ENCODE measurements at regions of chr6 and their contacts with region 1.

Region 1: GRCh38 chr6:26596579-26597388 is at the start of gene ABT1:
- DNase-seq: peak; percentile 99
- H3K4me3 ChIP-seq: peak within 1 kb of the TSS; percentile 51 to 93 (median 84)
- H3K27ac ChIP-seq: peak within 1 kb of the TSS; percentile 84 to 93 (median 88)
- H3K4me1 ChIP-seq: peaks cover 0 to 25% (median 13%) of the 10 kb centered on the region in 4 donors
- H3K27me3 ChIP-seq: peaks cover 12 to 31% (median 26%) of the 10 kb centered on the region in 3 donors
- CTCF ChIP-seq: no peak
- EP300 ChIP-seq: no peak
- POLR2A ChIP-seq: peak; percentile 48 to 88
- total RNA-seq, gene ABT1: 10.2 to 19.4 (median 15.8) TPM

Region 2: DNA sequence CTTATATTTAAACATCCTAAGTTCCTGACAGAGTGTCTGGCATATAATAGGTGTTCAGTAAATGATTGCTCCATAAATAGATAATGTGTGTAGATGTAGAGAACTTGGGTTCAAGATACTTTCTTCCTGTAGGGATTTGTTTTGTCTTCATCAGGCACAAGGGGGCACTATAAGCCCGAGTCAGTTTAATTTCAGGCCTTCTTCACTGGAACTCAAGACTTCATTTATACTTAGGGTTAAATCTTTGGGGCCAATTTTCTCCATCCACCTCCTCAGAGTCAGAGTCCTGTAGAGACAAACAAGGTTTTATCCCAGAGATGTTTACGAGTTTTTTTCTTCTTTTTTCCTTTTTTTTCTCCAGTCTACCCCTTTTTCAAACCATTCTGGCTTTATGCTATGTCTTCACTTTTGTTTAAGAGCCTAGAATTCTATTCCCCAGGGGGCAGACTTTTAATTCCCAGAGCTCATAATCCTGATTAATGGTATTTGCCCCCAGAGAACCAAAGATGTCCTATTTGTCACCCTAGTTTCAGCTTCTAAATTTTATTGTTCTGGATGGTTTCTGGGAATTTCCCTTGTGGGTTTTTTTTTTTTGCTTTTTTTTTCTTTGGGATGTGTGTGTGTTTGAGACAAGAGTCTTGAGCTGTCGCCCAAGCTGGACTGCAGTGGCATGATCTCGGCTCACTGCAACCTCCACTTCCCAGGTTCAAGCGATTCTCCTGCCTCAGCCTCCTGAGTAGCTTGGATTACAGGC is 421.2 kb before region 1 on chr6:
- intact Hi-C with region 1: loop called (anchors 5 kb)
- DNase-seq: no peak
- H3K4me3 ChIP-seq: no peak overlapping the region
- H3K27ac ChIP-seq: peak overlapping the region in 2 of 4 donors; percentile 34 to 52
- H3K4me1 ChIP-seq: peaks cover 0 to 19% (median 5%) of the 10 kb centered on the region in 4 donors
- H3K27me3 ChIP-seq: no peaks in the 10 kb centered on the region
- CTCF ChIP-seq: peak in 3 of 4 experiments; percentile 45 to 67 (median 63)
- EP300 ChIP-seq: no peak
- POLR2A ChIP-seq: no peak

Region 3: GRCh38 chr6:26342106-26343004 is 254.4 kb before region 1 on chr6:
- intact Hi-C with region 1: loop called (anchors 1 kb)
- DNase-seq: no peak
- H3K4me3 ChIP-seq: no peak overlapping the region
- H3K27ac ChIP-seq: no peak overlapping the region
- H3K4me1 ChIP-seq: peaks cover 0 to 4% (median 0%) of the 10 kb centered on the region in 4 donors
- H3K27me3 ChIP-seq: peaks cover 0 to 20% (median 3%) of the 10 kb centered on the region in 3 donors
- CTCF ChIP-seq: no peak
- EP300 ChIP-seq: no peak
- POLR2A ChIP-seq: no peak

Region 4: DNA sequence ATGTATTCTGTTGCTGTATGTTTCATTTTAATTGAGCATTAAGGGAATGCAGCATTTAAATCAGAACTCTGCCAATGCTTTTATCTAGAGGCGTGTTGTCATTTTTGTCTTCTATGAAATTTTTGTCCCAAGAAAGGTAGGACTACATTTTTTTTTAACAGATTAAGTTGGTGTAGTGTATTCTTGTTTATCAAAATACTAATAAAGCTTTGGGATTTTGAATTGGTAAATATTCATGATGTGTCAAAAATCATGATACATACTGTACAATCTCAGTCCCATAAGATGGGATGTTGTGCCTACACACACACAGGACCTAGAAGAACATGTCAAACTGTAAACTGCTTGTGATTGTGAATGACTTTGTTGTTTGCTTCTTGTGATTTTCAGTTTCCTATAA is 69.9 kb before region 1 on chr6:
- intact Hi-C with region 1: no loop called
- DNase-seq: no peak
- H3K4me3 ChIP-seq: no peak overlapping the region
- H3K27ac ChIP-seq: no peak overlapping the region
- H3K4me1 ChIP-seq: peaks cover 0 to 23% (median 4%) of the 10 kb centered on the region in 4 donors
- H3K27me3 ChIP-seq: no peaks in the 10 kb centered on the region
- CTCF ChIP-seq: no peak
- EP300 ChIP-seq: no peak
- POLR2A ChIP-seq: no peak

Region 5: DNA sequence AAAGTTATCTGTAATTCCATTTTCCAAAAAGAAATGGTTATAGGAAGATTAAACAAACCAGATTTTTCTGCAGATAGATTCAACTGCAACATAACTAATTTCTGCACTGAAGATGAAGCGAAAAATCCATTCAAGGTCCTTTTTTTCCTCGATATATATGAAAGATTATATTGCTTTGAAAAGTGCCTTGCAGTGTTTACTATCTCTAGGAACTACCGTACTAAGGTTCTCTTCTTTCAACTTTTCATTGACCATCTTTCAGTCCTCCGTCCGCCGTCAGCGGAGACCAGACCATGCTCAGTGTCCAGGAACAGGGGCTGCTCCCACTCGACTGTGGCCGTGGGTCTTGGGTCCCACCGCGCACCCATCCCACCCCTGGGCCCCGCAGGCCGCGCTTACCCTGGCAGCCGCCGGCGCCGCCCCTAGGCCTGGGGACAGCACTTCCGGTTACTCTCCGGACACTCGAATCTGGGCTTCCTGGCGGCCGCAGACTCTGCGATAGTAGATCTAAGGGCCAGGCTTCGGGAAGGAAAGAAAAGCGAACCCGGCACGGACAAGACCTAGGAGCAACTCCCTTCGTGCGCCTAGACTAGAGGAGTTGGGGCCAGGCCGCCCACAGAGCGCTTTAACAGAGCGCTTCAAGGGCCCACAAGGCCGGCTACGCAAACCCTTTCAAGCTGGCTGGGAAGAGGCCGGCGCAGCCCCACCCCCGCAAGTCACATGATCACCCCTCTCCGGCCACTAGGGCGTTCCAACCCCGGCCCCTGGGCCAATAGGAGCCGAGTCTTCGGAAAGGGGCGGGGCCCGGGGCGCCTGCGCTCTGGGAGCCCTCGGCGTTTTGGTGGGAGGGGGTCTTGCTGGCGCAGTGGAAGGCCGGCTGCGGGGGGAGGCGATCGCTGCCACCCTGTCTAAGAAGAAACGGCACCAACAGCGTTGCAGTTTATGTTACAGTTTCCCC is 62.5 kb after region 1 on chr6 and contains the start of gene ZNF322:
- intact Hi-C with region 1: loop called (anchors 2 kb)
- DNase-seq: peak; percentile 98
- H3K4me3 ChIP-seq: peak within 1 kb of the TSS; percentile 52 to 74 (median 60)
- H3K27ac ChIP-seq: peak within 1 kb of the TSS; percentile 77 to 90 (median 86)
- H3K4me1 ChIP-seq: peaks cover 0 to 34% (median 25%) of the 10 kb centered on the region in 4 donors
- H3K27me3 ChIP-seq: no peaks in the 10 kb centered on the region
- CTCF ChIP-seq: no peak
- EP300 ChIP-seq: no peak
- POLR2A ChIP-seq: peak; percentile 62 to 67
- total RNA-seq, gene ZNF322: 15.6 to 21.8 (median 20.3) TPM

Region 6: GRCh38 chr6:27066802-27067201 is 470.0 kb after region 1 on chr6:
- intact Hi-C with region 1: no loop called
- DNase-seq: no peak
- H3K4me3 ChIP-seq: no peak overlapping the region
- H3K27ac ChIP-seq: no peak overlapping the region
- H3K4me1 ChIP-seq: no peaks in the 10 kb centered on the region
- H3K27me3 ChIP-seq: no peaks in the 10 kb centered on the region
- CTCF ChIP-seq: no peak
- EP300 ChIP-seq: no peak
- POLR2A ChIP-seq: no peak

Region 7: DNA sequence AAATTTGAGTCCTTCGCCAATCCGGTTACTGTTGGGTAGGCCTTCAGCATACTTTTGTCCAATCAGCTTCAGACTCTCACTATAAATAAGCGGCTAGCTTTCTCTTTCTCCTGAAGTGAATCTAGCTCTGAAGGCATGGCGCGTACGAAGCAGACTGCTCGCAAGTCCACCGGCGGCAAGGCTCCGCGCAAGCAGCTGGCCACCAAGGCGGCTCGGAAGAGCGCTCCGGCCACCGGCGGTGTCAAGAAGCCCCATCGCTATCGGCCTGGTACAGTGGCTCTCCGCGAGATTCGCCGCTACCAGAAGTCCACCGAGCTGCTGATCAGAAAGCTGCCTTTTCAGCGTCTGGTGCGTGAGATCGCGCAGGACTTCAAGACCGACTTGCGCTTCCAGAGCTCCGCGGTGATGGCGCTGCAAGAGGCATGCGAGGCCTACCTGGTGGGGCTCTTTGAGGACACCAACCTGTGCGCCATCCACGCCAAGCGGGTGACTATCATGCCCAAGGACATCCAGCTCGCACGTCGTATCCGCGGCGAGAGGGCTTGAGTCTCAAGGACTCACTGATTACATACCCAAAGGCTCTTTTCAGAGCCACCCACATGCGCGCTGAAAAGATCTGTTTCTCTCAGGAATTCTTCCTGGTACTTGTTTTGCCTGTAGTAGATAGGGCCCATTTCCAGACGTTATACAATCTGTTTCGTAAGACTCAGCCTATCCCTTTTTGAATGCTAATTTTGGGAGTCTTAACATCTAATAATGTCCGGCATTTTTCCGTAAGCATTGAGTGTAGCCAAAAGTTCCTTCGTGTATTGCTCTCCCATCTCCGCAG is 1213.4 kb after region 1 on chr6:
- intact Hi-C with region 1: loop called (anchors 5 kb)
- DNase-seq: peak; percentile 89
- H3K4me3 ChIP-seq: peak overlapping the region; percentile 42 to 57 (median 50)
- H3K27ac ChIP-seq: peak overlapping the region; percentile 79 to 92 (median 84)
- H3K4me1 ChIP-seq: peaks cover 0 to 28% (median 16%) of the 10 kb centered on the region in 4 donors
- H3K27me3 ChIP-seq: peaks cover 22 to 85% (median 62%) of the 10 kb centered on the region in 3 donors
- CTCF ChIP-seq: no peak
- EP300 ChIP-seq: no peak
- POLR2A ChIP-seq: peak; percentile 93 to 96